ENCODE measurements at regions of chr3 and their contacts with region 1.

Region 1: DNA sequence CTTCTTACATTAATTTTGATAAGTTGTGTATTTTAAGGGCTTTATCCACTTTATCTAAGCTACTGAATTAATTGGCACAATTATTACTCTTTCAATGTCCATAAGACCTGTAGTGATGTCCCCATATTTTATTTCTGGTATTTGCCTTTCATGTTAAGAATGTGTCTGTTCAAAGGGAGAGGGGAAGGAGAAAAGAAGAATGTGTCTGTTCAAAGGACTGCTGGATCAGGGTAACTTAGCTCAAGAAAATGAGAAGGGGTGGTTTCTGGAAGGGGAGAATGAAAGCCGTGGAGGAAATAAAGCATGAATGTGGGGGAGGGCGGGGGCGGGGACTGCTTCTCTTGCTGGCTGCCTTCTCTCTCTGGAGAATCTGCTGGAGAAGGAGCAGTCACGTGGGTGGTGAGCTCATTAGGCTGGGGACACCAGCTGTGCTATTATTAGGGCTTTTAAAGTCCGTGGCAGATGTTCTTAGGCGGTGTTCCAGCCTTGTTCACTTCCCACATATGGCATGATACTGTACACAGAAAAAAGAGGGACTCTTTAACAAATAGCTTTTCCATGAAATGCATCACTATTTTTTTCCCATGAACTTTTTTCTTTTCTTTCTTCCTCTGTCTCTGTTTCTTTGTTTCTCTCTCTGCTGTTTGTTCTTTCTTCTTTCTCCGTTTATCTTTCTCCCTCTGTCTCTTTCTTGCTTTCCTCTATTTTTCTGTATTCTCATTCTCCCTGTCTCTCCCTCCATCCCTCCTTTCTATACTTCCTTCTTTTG is 63.7 kb upstream of the ULK4 start:
- DNase-seq: peak; percentile 90
- H3K4me3 ChIP-seq: peak overlapping the region; percentile 31
- CTCF ChIP-seq: no peak

Region 2: DNA sequence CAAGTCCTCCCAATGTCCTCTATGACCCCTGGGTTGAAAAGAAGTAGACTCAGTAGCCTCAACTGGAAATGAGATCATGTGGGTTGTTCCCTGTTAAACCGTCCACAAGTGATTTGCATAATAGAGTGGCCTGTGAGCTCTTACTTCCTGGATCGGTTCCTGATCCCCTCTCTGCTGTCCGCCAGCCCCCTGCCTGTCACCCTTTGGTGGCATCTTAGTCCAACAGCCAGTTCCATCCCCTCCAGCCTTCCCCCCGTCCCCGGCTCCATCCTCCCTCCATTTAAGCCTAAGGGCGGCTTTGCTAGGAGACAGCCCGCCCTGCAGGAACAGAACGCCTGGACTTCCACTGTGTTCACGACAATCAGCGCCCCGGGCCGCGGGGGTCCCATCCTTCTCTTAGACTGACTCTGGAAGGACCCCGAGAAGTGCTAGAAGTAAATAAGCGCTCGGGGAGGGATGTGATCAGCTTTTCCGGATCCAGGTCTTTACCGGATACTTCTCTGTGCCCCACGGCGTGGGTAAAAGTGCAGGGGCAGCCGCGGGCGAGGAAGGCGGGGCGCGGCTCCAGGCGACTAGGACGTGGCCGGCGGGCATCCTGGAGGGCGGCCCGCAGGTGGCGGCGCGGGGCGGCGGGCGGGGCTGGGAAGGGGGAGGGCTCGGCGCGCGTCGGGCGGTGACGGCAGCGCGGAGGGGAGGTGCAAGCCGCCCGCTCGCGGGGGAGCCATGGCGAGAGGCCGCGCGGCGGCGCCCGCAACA is 12.4 kb before region 1 on chr3:
- CTCF ChIA-PET with region 1: interaction called, 3 read pairs
- POLR2A ChIA-PET with region 1: interaction called, 10 read pairs
- DNase-seq: no peak
- H3K4me3 ChIP-seq: peak overlapping the region; percentile 75
- CTCF ChIP-seq: no peak

Region 3: DNA sequence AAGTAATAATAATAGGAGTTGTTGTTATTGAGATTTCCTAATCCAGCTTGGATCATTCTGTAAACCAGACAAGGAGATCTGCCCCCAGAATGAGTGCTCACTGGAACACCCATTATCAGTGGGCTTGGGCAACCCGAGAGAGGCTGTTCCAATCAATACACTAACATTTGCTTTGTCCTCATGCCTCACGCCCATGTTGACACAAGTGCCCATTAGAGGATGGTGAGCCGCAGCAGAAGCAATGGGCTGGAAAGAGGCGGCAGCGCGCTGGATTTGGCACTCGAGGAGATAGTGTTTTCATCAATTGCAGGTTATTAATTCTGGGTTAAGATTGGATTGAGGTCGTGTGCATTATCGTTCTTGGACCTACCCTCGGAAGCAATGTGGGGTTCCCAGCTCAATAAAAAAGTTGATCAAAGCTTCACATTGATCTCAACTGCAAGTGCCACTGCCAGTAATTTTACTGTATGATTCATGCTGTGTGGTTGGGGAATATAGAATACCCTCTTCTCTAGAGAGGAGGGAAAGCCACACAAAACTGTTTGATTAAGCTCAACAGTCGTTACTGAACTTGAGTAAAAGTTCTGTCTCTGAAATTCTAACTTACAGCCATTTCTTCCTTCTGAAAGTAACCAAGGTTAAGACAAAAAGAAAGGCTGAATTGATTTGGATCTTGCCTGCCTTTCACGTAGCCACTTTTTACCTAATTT is 369.2 kb after region 1 on chr3:
- CTCF ChIA-PET with region 1: no interaction called
- POLR2A ChIA-PET with region 1: no interaction called
- DNase-seq: no peak
- H3K4me3 ChIP-seq: no peak overlapping the region
- CTCF ChIP-seq: no peak

Measured in AG04449 (cell line).